ENCODE measurements at regions of chr11 and their contacts with region 1.

Region 1: GRCh38 chr11:57116654-57117053 is 65.1 kb upstream of the LRRC55 start:
- DNase-seq: peak; percentile 66
- H3K4me3 ChIP-seq: no peak overlapping the region
- H3K27ac ChIP-seq: no peak overlapping the region
- H3K4me1 ChIP-seq: no peaks in the 10 kb centered on the region
- H3K27me3 ChIP-seq: no peaks in the 10 kb centered on the region
- CTCF ChIP-seq: peak; percentile 58 to 62

Region 2: GRCh38 chr11:56990702-56991101 is 126.0 kb before region 1 on chr11:
- CTCF ChIA-PET with region 1: no interaction called
- dilution Hi-C with region 1: loop called (anchors 10 kb)
- in situ Hi-C with region 1: no loop called
- intact Hi-C with region 1: no loop called
- DNase-seq: no peak
- H3K4me3 ChIP-seq: no peak overlapping the region
- H3K27ac ChIP-seq: no peak overlapping the region
- H3K4me1 ChIP-seq: no peaks in the 10 kb centered on the region
- H3K27me3 ChIP-seq: no peaks in the 10 kb centered on the region
- CTCF ChIP-seq: no peak

Region 3: GRCh38 chr11:57269571-57270021 is 152.9 kb after region 1 on chr11:
- CTCF ChIA-PET with region 1: no interaction called
- dilution Hi-C with region 1: loop called (anchors 5 kb)
- in situ Hi-C with region 1: no loop called
- intact Hi-C with region 1: no loop called
- DNase-seq: no peak
- H3K4me3 ChIP-seq: no peak overlapping the region
- H3K27ac ChIP-seq: no peak overlapping the region
- H3K4me1 ChIP-seq: no peaks in the 10 kb centered on the region
- H3K27me3 ChIP-seq: no peaks in the 10 kb centered on the region
- CTCF ChIP-seq: no peak